ENCODE measurements at regions of chr19 and their contacts with region 1.

Region 1: DNA sequence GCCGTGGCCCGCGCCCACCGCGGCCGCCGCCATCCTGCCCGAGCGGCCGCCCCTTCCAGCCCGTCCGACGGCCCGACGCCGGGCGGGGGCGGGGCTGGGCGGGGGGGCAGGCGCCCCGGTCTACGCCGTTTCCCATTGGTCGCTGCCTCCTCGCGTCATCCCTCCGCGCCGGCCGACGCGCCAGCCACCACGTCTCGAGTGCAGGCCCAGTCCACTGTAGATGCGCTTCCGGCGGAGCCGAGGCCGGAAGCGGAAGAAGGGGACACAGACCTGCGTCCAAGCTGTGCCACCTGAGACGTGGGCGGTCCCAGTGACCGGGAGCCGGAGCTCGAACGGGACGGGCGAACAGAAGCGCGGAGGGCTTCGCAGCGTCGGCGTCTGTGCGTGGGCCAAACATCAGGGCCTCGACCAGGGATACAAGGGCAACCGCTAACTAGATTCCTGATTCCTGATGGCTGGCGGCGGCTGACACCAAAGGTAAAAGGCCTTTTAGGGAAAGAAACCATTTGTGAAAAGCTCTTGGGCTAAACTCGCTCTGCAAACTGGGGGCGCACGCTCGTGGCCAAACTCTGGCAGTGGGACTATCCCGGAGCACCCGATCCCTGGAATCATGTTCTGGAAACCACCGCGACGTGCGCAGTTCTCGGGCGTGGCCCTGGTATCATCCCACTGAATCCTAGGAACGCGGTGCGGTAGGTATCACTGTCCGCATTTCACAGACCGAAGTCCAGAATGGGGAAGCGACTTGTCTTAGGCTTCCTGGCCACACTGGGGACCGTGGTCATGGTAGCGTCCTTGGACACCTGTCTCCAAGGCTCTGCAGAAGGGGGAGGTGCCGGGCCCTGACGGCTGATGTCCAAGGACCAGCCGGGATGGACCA is at the start of gene SLC35E1:
- DNase-seq: peak; percentile 96
- ATAC-seq: peak; percentile 97
- H3K4me3 Mint-ChIP-seq: peak within 1 kb of the TSS; percentile 96
- H3K27ac Mint-ChIP-seq: peak within 1 kb of the TSS; percentile 96
- H3K4me1 Mint-ChIP-seq: peaks cover 53% of the 10 kb centered on the region
- H3K27me3 Mint-ChIP-seq: no peaks in the 10 kb centered on the region
- total RNA-seq, gene SLC35E1: 51.5 to 72.1 TPM

Region 2: GRCh38 chr19:15934332-15935174 is 638.0 kb before region 1 on chr19 and contains the start of gene CYP4F11:
- CTCF ChIA-PET with region 1: no interaction called
- POLR2A ChIA-PET with region 1: no interaction called
- intact Hi-C with region 1: no loop called
- DNase-seq: no peak
- ATAC-seq: no peak
- H3K4me3 Mint-ChIP-seq: no peak within 1 kb of the TSS
- H3K27ac Mint-ChIP-seq: no peak within 1 kb of the TSS
- H3K4me1 Mint-ChIP-seq: no peaks in the 10 kb centered on the region
- H3K27me3 Mint-ChIP-seq: peaks cover 5% of the 10 kb centered on the region
- total RNA-seq, gene CYP4F11: not detected

Region 3: GRCh38 chr19:16403151-16403977 is 169.2 kb before region 1 on chr19:
- CTCF ChIA-PET with region 1: no interaction called
- POLR2A ChIA-PET with region 1: no interaction called
- intact Hi-C with region 1: no loop called
- DNase-seq: no peak
- ATAC-seq: no peak
- H3K4me3 Mint-ChIP-seq: no peak overlapping the region
- H3K27ac Mint-ChIP-seq: no peak overlapping the region
- H3K4me1 Mint-ChIP-seq: peaks cover 12% of the 10 kb centered on the region
- H3K27me3 Mint-ChIP-seq: no peaks in the 10 kb centered on the region

Region 4: DNA sequence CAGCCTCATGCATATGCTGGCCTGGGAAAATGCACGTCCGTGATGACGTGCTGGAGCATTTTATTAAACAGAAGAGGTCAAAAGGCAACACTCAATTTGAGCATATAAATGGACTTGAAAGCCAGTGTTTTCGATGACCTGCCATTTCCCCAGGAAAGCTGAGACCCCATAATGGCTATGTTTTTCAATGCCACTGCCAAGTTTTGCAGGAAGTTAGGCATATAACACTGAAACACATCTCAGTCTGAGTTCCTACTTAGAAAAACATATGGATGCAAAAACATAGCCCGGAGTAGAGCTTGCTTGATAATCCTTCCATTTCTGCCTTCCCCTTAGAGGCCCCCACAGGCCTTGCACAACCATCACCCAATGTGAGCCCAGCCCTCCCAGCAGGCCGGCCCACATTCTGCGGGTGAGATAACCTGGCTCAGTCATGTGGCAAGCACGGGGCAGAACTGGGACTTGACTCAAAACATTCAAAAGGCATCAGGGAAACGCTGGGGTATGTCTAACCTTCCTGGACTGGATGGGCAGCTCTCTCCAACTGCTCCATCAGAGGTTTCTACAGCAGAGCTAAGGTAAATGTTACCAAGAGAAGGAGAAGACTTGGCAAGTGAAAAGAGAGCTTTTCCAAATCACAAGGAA is 125.7 kb before region 1 on chr19:
- CTCF ChIA-PET with region 1: no interaction called
- POLR2A ChIA-PET with region 1: no interaction called
- intact Hi-C with region 1: no loop called
- DNase-seq: peak; percentile 71
- ATAC-seq: peak; percentile 62
- H3K4me3 Mint-ChIP-seq: no peak overlapping the region
- H3K27ac Mint-ChIP-seq: peak overlapping the region; percentile 76
- H3K4me1 Mint-ChIP-seq: peaks cover 51% of the 10 kb centered on the region
- H3K27me3 Mint-ChIP-seq: no peaks in the 10 kb centered on the region

Region 5: DNA sequence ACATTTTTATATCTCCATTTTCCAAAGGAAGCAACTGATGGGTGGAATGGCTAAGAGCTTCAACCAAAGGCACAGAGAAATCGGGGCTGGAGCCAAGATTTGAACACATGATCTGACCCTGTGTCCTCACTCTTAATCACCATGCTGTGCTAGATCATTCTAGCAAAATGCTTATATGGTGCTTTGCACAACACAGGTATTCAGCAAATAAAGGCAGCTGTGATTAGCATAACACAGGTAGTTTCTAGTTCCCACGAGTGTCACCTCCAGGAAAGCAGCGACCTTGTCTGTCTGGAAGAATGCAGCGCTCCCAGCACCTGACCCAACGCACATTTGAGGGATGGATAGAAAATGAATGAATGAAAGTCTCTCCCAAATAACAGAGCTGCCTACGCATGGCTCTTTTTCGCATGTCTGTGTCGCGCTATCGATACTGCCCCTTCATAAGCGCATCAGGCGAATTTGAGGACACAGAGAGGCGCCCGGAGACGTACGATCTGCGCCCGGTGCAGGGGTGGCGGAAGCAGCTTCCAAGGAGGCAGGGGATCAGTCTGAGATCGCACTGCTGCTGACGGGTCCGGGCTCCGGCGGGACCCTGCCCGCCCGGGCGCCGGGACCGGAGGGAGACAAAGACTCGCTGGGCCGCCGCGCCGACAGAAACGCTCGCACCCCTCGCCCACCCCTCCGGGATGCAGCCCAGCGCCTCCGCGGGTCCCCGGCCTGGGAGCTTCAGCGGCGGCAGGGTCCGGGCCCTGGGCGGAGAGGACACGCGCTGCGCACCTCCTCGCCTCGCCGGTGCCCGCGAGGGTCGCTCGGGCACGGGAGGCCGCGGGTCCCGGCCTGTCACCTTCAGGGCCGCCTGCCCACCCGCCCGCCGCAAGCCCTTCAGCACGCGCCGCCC is 101.4 kb before region 1 on chr19:
- CTCF ChIA-PET with region 1: no interaction called
- POLR2A ChIA-PET with region 1: no interaction called
- intact Hi-C with region 1: loop called in 1 of 2 experiments (anchors 1 kb)
- DNase-seq: peak; percentile 60
- ATAC-seq: peak; percentile 20
- H3K4me3 Mint-ChIP-seq: peak overlapping the region; percentile 85
- H3K27ac Mint-ChIP-seq: peak overlapping the region; percentile 72
- H3K4me1 Mint-ChIP-seq: peaks cover 37% of the 10 kb centered on the region
- H3K27me3 Mint-ChIP-seq: peaks cover 2% of the 10 kb centered on the region

Region 6: GRCh38 chr19:16542045-16542909 is 30.3 kb before region 1 on chr19 and contains the start of gene CHERP:
- CTCF ChIA-PET with region 1: interaction called, 3 read pairs
- POLR2A ChIA-PET with region 1: interaction called, 4 read pairs
- intact Hi-C with region 1: loop called (anchors 1 kb)
- DNase-seq: peak; percentile 97
- ATAC-seq: peak; percentile 85
- H3K4me3 Mint-ChIP-seq: peak within 1 kb of the TSS; percentile 98
- H3K27ac Mint-ChIP-seq: peak within 1 kb of the TSS; percentile 94
- H3K4me1 Mint-ChIP-seq: peaks cover 63% of the 10 kb centered on the region
- H3K27me3 Mint-ChIP-seq: no peaks in the 10 kb centered on the region
- total RNA-seq, gene CHERP: 57.9 to 64.8 TPM

Region 7: GRCh38 chr19:16608290-16608739 is 35.7 kb after region 1 on chr19:
- CTCF ChIA-PET with region 1: interaction called, 4 read pairs
- POLR2A ChIA-PET with region 1: no interaction called
- intact Hi-C with region 1: loop called in 1 of 2 experiments (anchors 1 kb)
- DNase-seq: peak; percentile 23
- ATAC-seq: peak; percentile 87
- H3K4me3 Mint-ChIP-seq: no peak overlapping the region
- H3K27ac Mint-ChIP-seq: peak overlapping the region; percentile 37
- H3K4me1 Mint-ChIP-seq: peaks cover 39% of the 10 kb centered on the region
- H3K27me3 Mint-ChIP-seq: no peaks in the 10 kb centered on the region

Measured in activated CD4-positive, alpha-beta T cell treated with anti-CD3 and anti-CD28 coated beads for 36 hours (primary cell).